ENCODE measurements at regions of chr22 and their contacts with region 1.

Region 1: DNA sequence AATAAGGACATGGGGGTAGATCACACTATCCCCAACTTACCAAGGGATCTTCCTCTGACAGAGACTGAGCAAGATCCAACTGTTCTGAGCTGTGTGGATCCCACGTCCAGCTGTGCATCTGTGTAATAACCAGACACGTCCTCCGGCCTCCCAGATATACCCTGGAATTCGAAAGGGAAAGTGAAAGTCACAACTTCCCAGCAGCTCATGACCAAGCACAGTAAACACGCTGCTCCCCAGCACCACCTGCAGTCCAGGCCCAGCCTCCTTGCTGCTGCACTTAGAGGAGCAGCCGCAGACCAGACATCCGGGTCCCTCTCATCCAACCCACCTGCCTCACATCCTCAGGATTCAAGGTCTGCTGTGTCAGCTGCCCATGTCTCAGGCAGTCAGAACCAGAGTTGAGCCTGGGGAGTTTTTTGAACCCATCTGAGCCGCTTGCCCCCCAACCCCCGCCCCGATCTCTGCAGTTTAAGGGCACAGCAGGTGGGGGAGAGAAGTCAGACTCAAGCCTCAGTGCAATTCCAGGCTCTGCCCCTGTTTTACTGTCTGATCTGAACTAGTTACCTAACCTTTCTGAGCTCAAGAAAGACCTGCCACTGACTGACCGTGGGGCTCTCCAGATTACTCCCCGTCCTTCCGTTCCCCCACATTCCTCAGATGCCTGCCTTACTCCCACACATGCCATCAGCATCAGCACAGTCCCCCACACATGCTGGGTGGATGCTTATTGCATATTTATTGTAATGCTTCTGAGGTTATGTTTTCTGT is at the start of gene APOL2:
- DNase-seq: peak; percentile 93
- H3K4me3 ChIP-seq: peak within 1 kb of the TSS; percentile 76
- H3K27ac ChIP-seq: peak within 1 kb of the TSS; percentile 25
- H3K4me1 ChIP-seq: peaks cover 21% of the 10 kb centered on the region
- CTCF ChIP-seq: peak; percentile 78
- total RNA-seq, gene APOL2: 11.8 and 14.9 TPM in 2 replicates

Region 2: GRCh38 chr22:36160499-36160942 is 79.1 kb before region 1 on chr22 and contains the start of gene APOL3:
- CTCF ChIA-PET with region 1: interaction called, 3 read pairs
- POLR2A ChIA-PET with region 1: no interaction called
- intact Hi-C with region 1: loop called (anchors 5 kb)
- DNase-seq: peak; percentile 53
- H3K4me3 ChIP-seq: peak within 1 kb of the TSS; percentile 64
- H3K27ac ChIP-seq: peak within 1 kb of the TSS; percentile 55
- H3K4me1 ChIP-seq: peaks cover 69% of the 10 kb centered on the region
- CTCF ChIP-seq: no peak
- total RNA-seq, gene APOL3: 9.9 and 10.7 TPM in 2 replicates

Region 3: DNA sequence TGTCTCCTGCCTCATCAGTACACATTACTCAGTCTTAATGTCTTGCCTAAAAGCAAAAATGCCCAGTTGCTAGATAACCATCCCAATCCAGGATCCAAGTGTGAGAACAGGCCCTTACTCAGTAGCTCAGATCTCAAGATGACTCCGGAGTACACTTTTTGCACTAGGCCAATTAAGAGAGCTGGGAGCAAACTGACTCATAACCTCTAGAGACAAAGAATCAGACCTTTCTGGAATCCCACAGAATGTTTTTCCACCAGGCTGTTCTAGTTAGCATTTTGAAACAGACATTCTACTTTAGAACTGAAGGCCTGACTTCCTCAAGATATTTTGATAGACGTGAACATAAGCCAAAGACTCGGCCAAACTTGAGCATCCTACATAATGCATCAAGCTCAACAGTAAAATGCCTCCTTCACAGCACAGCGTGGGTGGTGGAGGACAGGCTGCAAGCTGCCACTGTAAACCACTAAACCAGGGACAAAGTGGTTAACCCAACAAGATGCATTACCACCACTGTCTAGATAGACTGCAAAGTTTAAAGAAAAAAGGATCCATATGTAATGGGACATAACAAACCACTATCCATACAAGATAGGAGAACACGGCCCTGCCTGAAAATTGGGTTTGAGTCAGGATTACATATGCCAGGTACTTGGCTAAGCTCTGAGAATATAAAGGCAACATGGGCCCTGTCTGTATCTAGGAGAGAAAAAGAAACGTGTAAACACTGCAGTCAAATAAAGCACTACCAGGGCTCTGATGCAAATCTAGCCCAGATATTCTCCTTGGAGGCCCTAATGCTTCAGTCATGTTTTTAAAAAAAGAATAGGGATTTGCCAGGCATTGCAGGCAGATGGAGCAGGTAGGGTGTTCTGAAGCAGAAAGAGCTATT is 99.8 kb after region 1 on chr22:
- CTCF ChIA-PET with region 1: no interaction called
- POLR2A ChIA-PET with region 1: no interaction called
- intact Hi-C with region 1: no loop called
- DNase-seq: no peak
- H3K4me3 ChIP-seq: no peak overlapping the region
- H3K27ac ChIP-seq: no peak overlapping the region
- H3K4me1 ChIP-seq: peaks cover 11% of the 10 kb centered on the region
- CTCF ChIP-seq: no peak

Measured in OCI-LY7 (cell line).